Gastrocnemius medialis (tissue), 4 donors: ENCODE measurements at regions of chr14 and their contacts with region 1.

Region 1: GRCh38 chr14:81400852-81401251 is 728 bp upstream of the STON2 start:
- DNase-seq: peak; percentile 91 to 92
- ATAC-seq: peak; percentile 80 to 89
- H3K4me3 ChIP-seq: peak overlapping the region in 1 of 4 donors; percentile 16
- H3K27ac ChIP-seq: peak overlapping the region; percentile 85 to 95 (median 92)
- H3K4me1 ChIP-seq: peaks cover 45 to 48% of the 10 kb centered on the region in 2 donors
- H3K27me3 ChIP-seq: no peaks in the 10 kb centered on the region
- CTCF ChIP-seq: peak in 1 of 5 experiments; percentile 19
- POLR2A ChIP-seq: no peak

Region 2: GRCh38 chr14:81234278-81234677 is 166.6 kb before region 1 on chr14:
- in situ Hi-C with region 1: no loop called
- intact Hi-C with region 1: no loop called
- DNase-seq: no peak
- ATAC-seq: no peak
- H3K4me3 ChIP-seq: no peak overlapping the region
- H3K27ac ChIP-seq: no peak overlapping the region
- H3K4me1 ChIP-seq: no peaks in the 10 kb centered on the region
- H3K27me3 ChIP-seq: no peaks in the 10 kb centered on the region
- CTCF ChIP-seq: no peak
- POLR2A ChIP-seq: no peak

Region 3: GRCh38 chr14:81287016-81287776 is 113.7 kb before region 1 on chr14:
- in situ Hi-C with region 1: no loop called
- intact Hi-C with region 1: no loop called
- DNase-seq: no peak
- ATAC-seq: no peak
- H3K4me3 ChIP-seq: no peak overlapping the region
- H3K27ac ChIP-seq: no peak overlapping the region
- H3K4me1 ChIP-seq: peaks cover 0 to 10% of the 10 kb centered on the region in 2 donors
- H3K27me3 ChIP-seq: no peaks in the 10 kb centered on the region
- CTCF ChIP-seq: no peak
- POLR2A ChIP-seq: no peak

Region 4: GRCh38 chr14:81301371-81301770 is 99.5 kb before region 1 on chr14:
- in situ Hi-C with region 1: no loop called
- intact Hi-C with region 1: loop called (anchors 2 kb)
- DNase-seq: no peak
- ATAC-seq: peak; percentile 63 to 71
- H3K4me3 ChIP-seq: no peak overlapping the region
- H3K27ac ChIP-seq: peak overlapping the region; percentile 47 to 69 (median 62)
- H3K4me1 ChIP-seq: peaks cover 44 to 49% of the 10 kb centered on the region in 2 donors
- H3K27me3 ChIP-seq: no peaks in the 10 kb centered on the region
- CTCF ChIP-seq: no peak
- POLR2A ChIP-seq: no peak

Region 5: DNA sequence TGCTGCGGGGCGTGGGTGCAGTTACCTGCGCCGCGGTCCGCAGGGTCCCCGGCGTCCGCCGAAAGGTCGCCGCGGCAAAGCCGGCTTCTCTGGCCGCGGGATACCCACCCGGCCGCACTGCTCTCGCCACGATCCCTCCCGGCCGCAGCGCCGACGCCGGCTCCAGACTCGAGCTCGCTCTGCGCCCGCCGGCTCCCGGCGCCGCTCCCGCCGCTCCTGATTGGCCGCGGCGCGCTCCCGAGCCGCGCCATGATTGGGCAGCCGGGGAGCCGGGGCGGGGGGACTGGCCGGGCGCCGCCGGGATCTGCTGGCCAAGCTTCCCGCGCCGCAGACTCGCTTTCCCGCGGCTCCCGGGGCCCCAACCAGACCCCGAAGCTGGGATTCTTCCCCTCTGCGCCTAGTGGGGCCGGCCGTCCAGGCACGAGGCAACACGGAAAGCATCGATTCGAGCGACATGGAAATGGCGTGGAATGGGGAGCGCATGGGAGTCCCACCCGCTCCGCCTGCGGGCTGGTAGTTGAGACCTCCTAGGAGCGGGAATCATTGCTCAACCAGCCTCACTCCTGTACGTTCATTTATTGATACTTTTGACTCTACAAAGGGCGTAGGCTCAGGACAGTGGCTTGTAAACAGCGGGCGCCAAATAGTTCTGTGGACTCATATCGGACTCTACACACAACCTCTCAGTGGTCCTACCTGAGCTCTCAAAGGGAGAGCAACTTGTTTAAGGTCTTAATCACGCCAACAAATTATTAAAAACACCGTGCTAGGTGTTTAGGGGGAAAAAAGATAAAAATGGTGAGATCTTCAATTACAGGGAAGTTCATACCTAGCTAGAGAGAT is 35.7 kb after region 1 on chr14:
- in situ Hi-C with region 1: loop called in 1 of 4 experiments (anchors 5 kb)
- intact Hi-C with region 1: loop called (anchors 5 kb)
- DNase-seq: peak; percentile 62 to 73
- ATAC-seq: peak; percentile 85 to 88
- H3K4me3 ChIP-seq: peak overlapping the region; percentile 78 to 93 (median 82)
- H3K27ac ChIP-seq: peak overlapping the region; percentile 80 to 87 (median 84)
- H3K4me1 ChIP-seq: peaks cover 20 to 24% of the 10 kb centered on the region in 2 donors
- H3K27me3 ChIP-seq: no peaks in the 10 kb centered on the region
- CTCF ChIP-seq: no peak
- POLR2A ChIP-seq: peak; percentile 83 to 91

Region 6: DNA sequence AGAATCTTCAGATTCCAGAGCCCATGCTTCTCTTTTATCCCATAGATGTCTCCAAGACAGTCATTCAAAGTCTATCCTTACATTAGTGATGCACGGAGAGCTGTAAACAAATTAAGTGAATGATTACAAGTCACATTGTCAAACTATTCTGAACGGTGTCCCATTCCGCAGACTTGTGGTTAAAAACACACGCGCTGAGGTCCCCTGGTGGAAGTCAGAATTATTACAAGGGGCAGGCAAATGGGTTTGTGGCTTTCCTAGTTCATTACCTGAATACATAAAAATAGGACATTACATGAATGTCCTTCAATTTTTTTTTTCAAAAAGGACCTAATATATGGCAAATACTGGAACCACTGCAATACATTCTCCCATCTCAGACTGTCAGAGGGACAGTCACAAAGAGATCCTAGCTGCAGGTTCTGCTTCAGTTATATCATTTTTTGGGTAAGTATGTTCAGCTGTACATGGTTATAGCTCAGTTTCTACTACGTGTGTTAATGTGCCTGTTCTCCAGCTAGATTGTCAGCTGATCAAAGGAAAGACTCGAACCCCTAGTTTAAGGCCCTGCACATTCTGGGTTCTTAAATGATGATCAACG is 52.4 kb after region 1 on chr14:
- in situ Hi-C with region 1: loop called in 1 of 4 experiments (anchors 5 kb)
- intact Hi-C with region 1: loop called (anchors 2 kb)
- DNase-seq: peak; percentile 36 to 39
- ATAC-seq: peak; percentile 38 to 50
- H3K4me3 ChIP-seq: no peak overlapping the region
- H3K27ac ChIP-seq: peak overlapping the region; percentile 17 to 89 (median 84)
- H3K4me1 ChIP-seq: peaks cover 27 to 37% of the 10 kb centered on the region in 2 donors
- H3K27me3 ChIP-seq: no peaks in the 10 kb centered on the region
- CTCF ChIP-seq: peak; percentile 86 to 96 (median 90)
- POLR2A ChIP-seq: no peak

Region 7: GRCh38 chr14:81633496-81633895 is 232.6 kb after region 1 on chr14:
- in situ Hi-C with region 1: no loop called
- intact Hi-C with region 1: no loop called
- DNase-seq: no peak
- ATAC-seq: no peak
- H3K4me3 ChIP-seq: no peak overlapping the region
- H3K27ac ChIP-seq: no peak overlapping the region
- H3K4me1 ChIP-seq: no peaks in the 10 kb centered on the region
- H3K27me3 ChIP-seq: no peaks in the 10 kb centered on the region
- CTCF ChIP-seq: no peak
- POLR2A ChIP-seq: no peak